Ovary (tissue), 10 donors: ENCODE measurements at regions of chr22 and their contacts with region 1.

Region 1: DNA sequence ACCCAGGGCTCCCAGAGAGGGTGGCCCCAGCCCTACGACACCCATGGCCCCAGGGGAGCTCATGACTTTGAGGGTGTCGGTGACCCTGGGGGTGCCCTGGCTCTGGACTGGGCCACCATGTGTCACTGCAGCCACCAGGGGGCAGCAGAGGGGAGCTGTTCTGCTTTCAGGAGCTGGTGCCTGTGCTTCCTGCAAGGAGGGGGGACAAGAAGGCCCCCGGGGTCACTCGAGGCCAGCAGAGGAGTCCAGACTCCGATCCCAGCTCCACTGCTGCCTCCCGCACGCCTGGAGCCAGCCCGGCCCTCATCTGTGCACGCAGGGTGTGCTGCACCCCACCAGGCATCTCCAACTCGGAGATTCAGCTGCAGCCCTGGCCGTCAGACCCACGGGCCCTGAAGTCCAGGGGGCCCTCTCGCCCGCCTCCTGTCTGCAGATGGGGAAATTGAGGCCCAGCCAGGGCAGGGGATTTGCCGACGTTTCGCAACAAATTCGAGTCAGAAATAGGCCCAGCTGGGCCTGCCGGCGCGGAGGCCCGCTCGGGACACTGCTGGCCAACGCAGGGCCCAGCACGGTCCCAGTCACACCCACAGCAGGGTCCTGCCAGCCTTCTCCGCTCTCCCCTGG is 29.5 kb upstream of the WNT7B start:
- DNase-seq: peak; percentile 94 to 97 (median 96)
- H3K4me3 ChIP-seq: no peak overlapping the region
- H3K27ac ChIP-seq: peak overlapping the region; percentile 85 to 96
- H3K4me1 ChIP-seq: peaks cover 18% of the 10 kb centered on the region
- H3K27me3 ChIP-seq: no peaks in the 10 kb centered on the region
- CTCF ChIP-seq: peak; percentile 97 to 99 (median 98)
- EP300 ChIP-seq: no peak
- POLR2A ChIP-seq: peak; percentile 39

Region 2: GRCh38 chr22:46116491-46116958 is 110.0 kb after region 1 on chr22:
- intact Hi-C with region 1: loop called (anchors 1 to 2 kb)
- DNase-seq: peak; percentile 95 to 98 (median 97)
- H3K4me3 ChIP-seq: no peak overlapping the region
- H3K27ac ChIP-seq: peak overlapping the region; percentile 57 to 69
- H3K4me1 ChIP-seq: peaks cover 27% of the 10 kb centered on the region
- H3K27me3 ChIP-seq: no peaks in the 10 kb centered on the region
- CTCF ChIP-seq: peak in 2 of 3 donors; percentile 96 to 97
- EP300 ChIP-seq: no peak
- POLR2A ChIP-seq: no peak

Region 3: GRCh38 chr22:46425016-46425415 is 418.5 kb after region 1 on chr22:
- intact Hi-C with region 1: no loop called
- DNase-seq: no peak
- H3K4me3 ChIP-seq: no peak overlapping the region
- H3K27ac ChIP-seq: no peak overlapping the region
- H3K4me1 ChIP-seq: no peaks in the 10 kb centered on the region
- H3K27me3 ChIP-seq: no peaks in the 10 kb centered on the region
- CTCF ChIP-seq: no peak
- EP300 ChIP-seq: no peak
- POLR2A ChIP-seq: no peak